ENCODE measurements at regions of chr1 and their contacts with region 1.

Region 1: GRCh38 chr1:41416552-41417334 is 55.5 kb downstream of the FOXO6 start:
- DNase-seq: peak; percentile 40
- H3K4me3 ChIP-seq: no peak overlapping the region
- CTCF ChIP-seq: peak; percentile 86

Region 2: DNA sequence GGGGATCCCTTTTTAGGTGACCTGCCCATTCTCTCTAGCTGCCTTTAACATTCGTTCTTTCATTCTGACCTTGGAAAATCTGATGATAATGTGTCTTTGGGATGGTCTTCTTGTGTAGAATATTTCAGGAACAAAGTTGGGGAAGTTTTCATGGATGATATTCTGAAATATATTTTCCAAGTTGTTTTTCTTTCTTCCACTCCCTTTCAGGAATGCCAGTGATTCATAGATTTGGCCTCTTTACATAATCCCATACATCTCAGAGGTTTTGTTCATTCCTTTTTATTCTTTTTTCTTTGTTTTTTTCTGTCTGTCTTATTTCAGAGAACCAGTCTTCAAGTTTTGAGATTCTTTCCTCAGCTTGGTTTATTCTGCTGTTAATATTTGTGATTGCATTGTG is 160.8 kb before region 1 on chr1:
- in situ Hi-C with region 1: no loop called
- DNase-seq: no peak
- H3K4me3 ChIP-seq: no peak overlapping the region
- CTCF ChIP-seq: no peak

Region 3: DNA sequence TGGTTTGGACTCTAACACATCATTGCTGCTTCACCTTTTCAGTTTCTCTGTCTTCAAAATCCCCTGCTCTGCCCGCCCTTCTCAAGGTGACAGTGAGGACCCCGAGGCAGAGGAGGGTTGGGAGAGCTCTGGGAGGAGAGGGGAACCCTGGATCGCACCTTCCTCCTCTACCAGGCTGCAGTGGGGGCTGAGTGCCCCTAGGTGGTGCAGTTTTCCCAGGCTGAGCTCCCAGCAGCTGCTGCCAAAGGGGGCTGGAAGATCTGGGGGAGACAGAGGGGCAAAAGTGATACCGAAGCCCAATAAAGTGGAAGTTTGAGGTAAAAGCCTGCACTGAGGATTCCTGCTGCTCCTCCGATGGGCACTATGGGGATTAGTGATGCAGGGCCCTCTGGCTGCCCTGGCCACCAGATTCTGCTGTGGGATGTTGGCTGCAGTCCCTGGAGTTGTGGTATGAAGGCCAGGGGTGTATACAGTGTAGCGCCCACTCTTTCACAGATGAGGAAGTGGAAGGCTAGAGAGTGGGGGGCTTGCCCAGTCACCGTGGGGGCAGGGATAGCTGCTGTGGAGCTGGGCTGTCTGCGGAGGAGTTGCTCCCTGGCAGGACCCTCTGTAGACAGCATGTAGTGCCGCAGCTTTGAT is 133.9 kb before region 1 on chr1:
- in situ Hi-C with region 1: loop called (anchors 25 kb)
- DNase-seq: no peak
- H3K4me3 ChIP-seq: no peak overlapping the region
- CTCF ChIP-seq: peak; percentile 95